ENCODE measurements at regions of chr10 and their contacts with region 1.

Region 1: GRCh38 chr10:80444646-80445319 is 9.3 kb upstream of the TSPAN14 start:
- DNase-seq: no peak
- H3K4me3 ChIP-seq: no peak overlapping the region
- CTCF ChIP-seq: peak; percentile 82

Region 2: GRCh38 chr10:80382989-80383388 is 61.8 kb before region 1 on chr10:
- CTCF ChIA-PET with region 1: interaction called, 10 read pairs
- POLR2A ChIA-PET with region 1: no interaction called
- DNase-seq: no peak
- H3K4me3 ChIP-seq: no peak overlapping the region
- CTCF ChIP-seq: peak; percentile 33

Region 3: GRCh38 chr10:80480852-80481251 is 36.1 kb after region 1 on chr10:
- CTCF ChIA-PET with region 1: no interaction called
- POLR2A ChIA-PET with region 1: no interaction called
- DNase-seq: no peak
- H3K4me3 ChIP-seq: no peak overlapping the region
- CTCF ChIP-seq: no peak

Region 4: GRCh38 chr10:80498833-80499741 is 54.3 kb after region 1 on chr10:
- CTCF ChIA-PET with region 1: interaction called, 717 read pairs
- POLR2A ChIA-PET with region 1: no interaction called
- DNase-seq: peak; percentile 91
- H3K4me3 ChIP-seq: no peak overlapping the region
- CTCF ChIP-seq: no peak

Region 5: GRCh38 chr10:80662577-80663261 is 217.9 kb after region 1 on chr10:
- CTCF ChIA-PET with region 1: interaction called, 43 read pairs
- POLR2A ChIA-PET with region 1: no interaction called
- DNase-seq: peak; percentile 26
- H3K4me3 ChIP-seq: peak overlapping the region; percentile 41
- CTCF ChIP-seq: peak; percentile 93

Region 6: DNA sequence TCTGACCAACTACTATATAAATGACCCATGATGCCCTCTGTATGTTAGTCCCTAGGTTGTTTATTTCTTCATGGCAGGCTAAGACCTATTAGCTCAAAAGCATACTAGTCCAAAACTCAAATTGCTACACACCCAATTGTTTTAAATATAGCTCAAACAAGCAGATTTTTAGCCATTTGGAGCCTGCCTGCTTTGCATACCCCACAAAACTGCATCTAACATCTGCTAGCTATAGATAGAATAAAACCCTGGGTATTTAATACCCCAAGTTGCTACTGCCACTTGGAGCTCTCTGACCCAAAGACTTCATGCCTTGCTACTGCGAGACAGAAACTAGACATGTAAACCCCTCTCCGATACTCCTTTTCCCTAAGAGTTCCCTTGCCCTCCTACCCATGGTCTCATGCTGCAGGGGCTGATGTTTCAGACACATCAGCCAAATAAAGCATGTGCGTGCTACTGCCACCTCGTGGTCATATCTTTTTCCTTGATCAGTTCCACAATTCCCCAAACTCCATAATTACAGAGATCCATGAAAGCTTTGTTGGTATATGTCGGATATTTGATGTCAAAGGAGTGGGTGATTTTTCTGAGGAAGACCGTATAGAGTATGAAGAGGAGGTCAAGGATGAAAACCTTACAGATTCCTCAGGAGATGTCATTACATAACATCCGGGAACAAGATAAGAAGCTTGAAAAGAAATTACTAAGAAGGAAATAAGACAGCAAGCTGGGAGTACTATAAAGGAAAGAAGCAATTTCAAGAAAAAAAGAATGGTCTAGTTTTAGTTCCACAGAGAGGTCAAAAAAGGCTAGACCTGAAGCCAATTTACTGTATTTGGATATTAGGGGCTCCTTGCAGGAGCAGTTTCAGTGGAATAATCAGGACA is 479.5 kb after region 1 on chr10:
- CTCF ChIA-PET with region 1: interaction called, 23 read pairs
- POLR2A ChIA-PET with region 1: no interaction called
- DNase-seq: no peak
- H3K4me3 ChIP-seq: no peak overlapping the region
- CTCF ChIP-seq: peak; percentile 18

Measured in AG04449 (cell line).